ENCODE measurements at regions of chr6 and their contacts with region 1.

Region 1: GRCh38 chr6:119856136-119856535 is 506.6 kb upstream of the MAN1A1 start:
- DNase-seq: peak; percentile 25
- ATAC-seq: no peak
- H3K4me3 ChIP-seq: peak overlapping the region; percentile 44; the same call in 1 of the 2 replicates
- H3K27ac ChIP-seq: no peak overlapping the region
- H3K4me1 ChIP-seq: peaks cover 21% of the 10 kb centered on the region
- H3K27me3 ChIP-seq: no peaks in the 10 kb centered on the region
- CTCF ChIP-seq: no peak

Region 2: GRCh38 chr6:119957195-119957594 is 101.1 kb after region 1 on chr6:
- CTCF ChIA-PET with region 1: no interaction called
- POLR2A ChIA-PET with region 1: no interaction called
- intact Hi-C with region 1: loop called (anchors 10 kb)
- DNase-seq: no peak
- ATAC-seq: no peak
- H3K4me3 ChIP-seq: no peak overlapping the region
- H3K27ac ChIP-seq: no peak overlapping the region
- H3K4me1 ChIP-seq: no peaks in the 10 kb centered on the region; the same call in 1 of the 2 replicates
- H3K27me3 ChIP-seq: no peaks in the 10 kb centered on the region
- CTCF ChIP-seq: no peak

Region 3: GRCh38 chr6:120198033-120198432 is 341.9 kb after region 1 on chr6:
- CTCF ChIA-PET with region 1: no interaction called
- POLR2A ChIA-PET with region 1: no interaction called
- intact Hi-C with region 1: no loop called
- DNase-seq: peak; percentile 32
- ATAC-seq: no peak; the same call in 1 of the 2 replicates
- H3K4me3 ChIP-seq: no peak overlapping the region
- H3K27ac ChIP-seq: no peak overlapping the region
- H3K4me1 ChIP-seq: no peaks in the 10 kb centered on the region
- H3K27me3 ChIP-seq: no peaks in the 10 kb centered on the region
- CTCF ChIP-seq: no peak

Measured in PC-3 (cell line).